ENCODE measurements at regions of chr15 and their contacts with region 1.

Region 1: DNA sequence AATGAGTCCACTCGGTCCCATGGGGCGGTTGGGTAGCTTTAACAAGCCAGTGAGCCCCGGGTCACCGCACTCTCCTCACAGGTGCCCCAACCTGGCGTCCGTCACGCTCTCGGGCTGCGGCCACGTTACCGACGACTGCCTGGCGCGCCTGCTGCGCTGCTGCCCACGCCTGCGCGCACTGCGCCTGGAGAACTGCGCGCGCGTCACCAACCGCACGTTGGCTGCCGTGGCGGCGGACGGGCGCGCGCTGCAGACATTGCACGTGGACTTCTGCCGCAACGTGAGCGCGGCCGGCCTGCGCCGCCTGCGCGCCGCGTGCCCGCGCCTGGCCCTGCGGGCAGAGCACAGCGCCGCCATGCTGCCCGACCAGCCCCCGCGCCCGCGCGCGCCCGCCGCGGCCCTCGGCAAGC is 3.4 kb downstream of the FBXL22 start:
- DNase-seq: peak; percentile 52
- H3K4me3 ChIP-seq: peak overlapping the region; percentile 73 to 91 (median 84)
- H3K27ac ChIP-seq: peak overlapping the region; percentile 82 to 94 (median 90)
- H3K4me1 ChIP-seq: peaks cover 9 to 79% (median 31%) of the 10 kb centered on the region in 3 donors
- H3K27me3 ChIP-seq: no peaks in the 10 kb centered on the region
- CTCF ChIP-seq: peak in 4 of 6 experiments; percentile 19 to 38 (median 35)
- POLR2A ChIP-seq: peak in 3 of 4 donors; percentile 66 to 89 (median 84)

Region 2: DNA sequence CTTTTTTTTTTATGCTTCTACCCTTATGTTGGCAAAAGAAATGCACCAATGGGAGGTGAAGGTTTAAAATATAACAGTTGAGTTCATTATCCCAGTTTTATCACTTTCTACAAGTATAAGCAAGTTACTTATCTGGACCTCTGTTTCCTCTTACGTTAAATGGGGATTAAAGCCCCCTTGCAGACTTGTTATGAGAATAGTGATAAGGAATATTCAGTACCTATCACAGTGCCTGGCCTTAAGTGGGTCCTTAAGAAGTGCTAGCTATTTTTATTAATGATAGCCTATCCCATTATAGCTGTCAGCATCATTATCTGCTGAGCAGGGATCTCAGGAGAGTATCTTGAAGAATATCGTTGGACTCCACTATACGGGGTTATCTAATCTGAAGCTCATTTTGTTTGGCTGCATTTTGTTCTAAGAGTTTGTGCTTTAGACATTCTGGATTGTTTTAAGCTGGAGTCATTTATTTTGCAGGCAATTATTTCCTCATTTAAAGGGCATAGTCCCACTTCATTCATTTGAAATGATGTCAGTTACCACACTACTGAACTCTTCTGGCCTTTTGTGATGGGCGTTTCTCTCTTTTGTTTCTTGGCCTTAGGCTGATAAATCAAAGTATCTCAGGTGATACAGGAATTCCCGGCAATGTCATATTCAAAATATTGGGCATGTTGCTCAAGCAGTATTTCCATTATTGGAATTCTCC is 382.4 kb before region 1 on chr15:
- intact Hi-C with region 1: no loop called
- DNase-seq: no peak
- H3K4me3 ChIP-seq: no peak overlapping the region
- H3K27ac ChIP-seq: peak overlapping the region in 3 of 4 donors; percentile 4 to 62 (median 60)
- H3K4me1 ChIP-seq: peaks cover 0 to 53% (median 22%) of the 10 kb centered on the region in 3 donors
- H3K27me3 ChIP-seq: no peaks in the 10 kb centered on the region
- CTCF ChIP-seq: no peak
- POLR2A ChIP-seq: no peak

Region 3: DNA sequence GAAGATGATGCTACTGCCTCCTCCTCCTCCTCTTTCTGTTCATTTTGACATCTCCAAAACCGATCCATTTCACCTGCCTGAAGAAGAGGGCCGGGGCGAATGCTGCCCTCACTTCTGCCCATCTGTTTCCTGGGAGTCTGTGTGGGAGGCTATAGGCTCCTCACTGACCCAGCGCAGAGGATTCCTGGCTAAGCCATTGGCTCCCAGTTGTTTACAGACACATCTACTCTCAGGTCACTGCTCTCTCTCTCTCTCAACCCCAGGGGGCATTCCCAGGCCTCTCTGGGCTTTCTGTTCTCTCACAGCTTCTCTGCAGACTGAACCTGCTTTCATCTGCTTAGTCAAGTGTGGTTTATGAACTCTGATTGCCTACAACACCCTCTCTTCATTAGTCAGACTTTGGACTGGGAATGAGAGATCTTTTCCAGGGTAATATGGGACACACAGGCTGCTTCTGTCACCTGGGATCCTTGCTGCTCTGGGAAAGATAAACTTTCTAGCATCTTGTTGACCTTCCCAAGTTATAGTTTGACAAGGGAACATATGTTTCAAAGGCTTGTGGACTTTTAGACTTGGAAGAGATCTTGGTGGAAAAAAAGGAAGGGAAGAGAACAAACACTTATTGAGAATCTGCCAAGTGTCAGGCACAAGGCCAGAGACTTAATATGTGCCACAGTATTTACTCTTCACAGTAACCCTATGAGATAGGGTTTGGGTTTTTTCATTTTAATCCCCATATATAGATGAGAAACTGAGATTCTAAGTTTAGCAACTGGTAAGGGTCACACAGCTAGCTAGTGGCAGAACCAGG is 126.4 kb before region 1 on chr15:
- intact Hi-C with region 1: loop called (anchors 5 kb)
- DNase-seq: no peak
- H3K4me3 ChIP-seq: no peak overlapping the region
- H3K27ac ChIP-seq: peak overlapping the region; percentile 2 to 64 (median 52)
- H3K4me1 ChIP-seq: peaks cover 5 to 41% (median 10%) of the 10 kb centered on the region in 3 donors
- H3K27me3 ChIP-seq: no peaks in the 10 kb centered on the region
- CTCF ChIP-seq: no peak
- POLR2A ChIP-seq: no peak

Region 4: GRCh38 chr15:63504247-63504978 is 96.2 kb before region 1 on chr15 and contains the start of gene USP3:
- intact Hi-C with region 1: loop called (anchors 10 kb)
- DNase-seq: peak; percentile 69
- H3K4me3 ChIP-seq: peak within 1 kb of the TSS; percentile 69 to 93 (median 84)
- H3K27ac ChIP-seq: peak within 1 kb of the TSS; percentile 93 to 99 (median 98)
- H3K4me1 ChIP-seq: peaks cover 38 to 81% (median 59%) of the 10 kb centered on the region in 3 donors
- H3K27me3 ChIP-seq: no peaks in the 10 kb centered on the region
- CTCF ChIP-seq: peak in 3 of 6 experiments; percentile 24 to 41 (median 29)
- POLR2A ChIP-seq: peak in 3 of 4 donors; percentile 54 to 88 (median 82)
- total RNA-seq, gene USP3: 27.3 to 52.8 (median 32.2) TPM

Region 5: GRCh38 chr15:63677730-63678129 is 77.1 kb after region 1 on chr15:
- intact Hi-C with region 1: no loop called
- DNase-seq: no peak
- H3K4me3 ChIP-seq: no peak overlapping the region
- H3K27ac ChIP-seq: no peak overlapping the region
- H3K4me1 ChIP-seq: no peaks in the 10 kb centered on the region
- H3K27me3 ChIP-seq: no peaks in the 10 kb centered on the region
- CTCF ChIP-seq: no peak
- POLR2A ChIP-seq: no peak

Region 6: DNA sequence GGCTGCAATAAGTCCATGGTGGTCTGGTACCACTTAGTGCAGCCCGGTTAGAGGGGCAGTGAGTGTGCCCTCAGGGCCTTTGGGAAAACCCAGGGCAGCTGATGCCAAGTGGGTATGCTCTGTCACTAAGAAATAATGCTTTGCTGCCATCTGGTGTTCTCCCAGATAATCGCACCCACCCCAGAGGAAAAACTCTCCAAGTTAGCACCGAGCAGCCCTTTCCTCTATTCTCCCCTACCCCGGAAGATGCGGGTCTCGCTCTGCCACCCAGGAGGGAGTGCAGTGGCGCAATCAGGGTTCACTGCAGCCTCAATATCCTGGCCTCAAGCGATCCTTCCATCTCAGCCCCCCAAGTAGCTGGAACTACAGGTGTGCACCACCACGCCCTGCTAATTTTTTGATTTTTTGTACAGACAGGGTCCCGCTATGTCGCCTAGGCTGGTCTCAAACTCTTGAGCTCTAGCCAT is 467.0 kb after region 1 on chr15:
- intact Hi-C with region 1: loop called (anchors 10 kb)
- DNase-seq: no peak
- H3K4me3 ChIP-seq: no peak overlapping the region
- H3K27ac ChIP-seq: no peak overlapping the region
- H3K4me1 ChIP-seq: peaks cover 4 to 36% (median 12%) of the 10 kb centered on the region in 3 donors
- H3K27me3 ChIP-seq: no peaks in the 10 kb centered on the region
- CTCF ChIP-seq: peak; percentile 69 to 87 (median 84)
- POLR2A ChIP-seq: no peak